ENCODE measurements at regions of chr1 and their contacts with region 1.

Region 1: GRCh38 chr1:1019122-1019999 is 559 bp upstream of the AGRN start:
- DNase-seq: peak; percentile 64 to 92 (median 78)
- ATAC-seq: peak; percentile 82
- H3K4me3 ChIP-seq: peak overlapping the region; percentile 40
- H3K4me3 Mint-ChIP-seq: peak overlapping the region; percentile 79
- H3K27ac ChIP-seq: no peak overlapping the region
- H3K27ac Mint-ChIP-seq: no peak overlapping the region
- H3K4me1 ChIP-seq: peaks cover 40% of the 10 kb centered on the region
- H3K4me1 Mint-ChIP-seq: peaks cover 22% of the 10 kb centered on the region
- H3K27me3 ChIP-seq: peaks cover 0 to 1% of the 10 kb centered on the region in 2 experiments
- H3K27me3 Mint-ChIP-seq: peaks cover 5% of the 10 kb centered on the region
- CTCF ChIP-seq: peak; percentile 43

Region 2: DNA sequence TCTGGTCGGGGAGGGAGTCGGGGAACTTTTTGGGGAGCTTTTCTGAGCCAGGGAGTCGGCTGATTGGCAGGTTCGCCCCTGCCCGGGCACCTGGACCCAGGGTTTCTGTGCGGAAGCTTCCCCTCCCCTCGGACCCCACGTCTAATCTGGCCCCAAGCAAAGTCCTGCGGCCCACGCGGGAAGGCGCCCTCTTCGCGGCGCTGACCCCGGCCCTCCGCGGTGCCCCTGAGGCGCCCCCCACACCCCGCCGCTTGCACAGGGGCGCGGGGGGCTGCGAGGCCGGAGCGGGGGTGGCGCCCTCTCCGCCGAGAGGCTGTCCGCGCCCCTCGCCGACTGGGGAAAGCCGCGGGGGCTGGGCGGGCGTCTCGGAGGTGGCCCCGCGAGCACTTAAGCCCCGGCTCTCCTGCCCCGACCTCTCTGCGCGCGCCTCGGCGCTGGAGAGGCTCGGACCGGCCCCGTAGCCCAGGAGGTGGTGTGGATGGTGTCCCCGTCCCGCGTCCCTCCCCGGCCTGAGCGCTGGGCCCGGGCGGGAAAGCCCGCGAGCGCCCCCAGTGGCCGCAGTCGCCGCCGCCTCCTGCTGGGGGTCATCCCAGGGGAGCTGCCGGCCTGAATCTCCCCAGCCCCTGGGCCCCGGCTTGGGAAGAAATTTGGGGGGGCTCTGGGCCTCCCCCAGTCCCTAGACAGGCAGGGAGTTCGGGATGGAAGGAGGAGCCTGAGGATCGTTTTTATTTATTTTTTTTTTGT is 17.7 kb before region 1 on chr1:
- CTCF ChIA-PET with region 1: interaction called, 6 read pairs
- POLR2A ChIA-PET with region 1: interaction called, 11 read pairs
- intact Hi-C with region 1: no loop called
- DNase-seq: peak in 13 of 14 experiments; percentile 44 to 80 (median 62)
- ATAC-seq: no peak
- H3K4me3 ChIP-seq: peak overlapping the region; percentile 37
- H3K4me3 Mint-ChIP-seq: peak overlapping the region; percentile 87
- H3K27ac ChIP-seq: no peak overlapping the region
- H3K27ac Mint-ChIP-seq: peak overlapping the region; percentile 94
- H3K4me1 ChIP-seq: peaks cover 49% of the 10 kb centered on the region
- H3K4me1 Mint-ChIP-seq: peaks cover 17% of the 10 kb centered on the region
- H3K27me3 ChIP-seq: peaks cover 65 to 78% of the 10 kb centered on the region in 2 experiments
- H3K27me3 Mint-ChIP-seq: peaks cover 57% of the 10 kb centered on the region
- CTCF ChIP-seq: peak; percentile 92

Region 3: DNA sequence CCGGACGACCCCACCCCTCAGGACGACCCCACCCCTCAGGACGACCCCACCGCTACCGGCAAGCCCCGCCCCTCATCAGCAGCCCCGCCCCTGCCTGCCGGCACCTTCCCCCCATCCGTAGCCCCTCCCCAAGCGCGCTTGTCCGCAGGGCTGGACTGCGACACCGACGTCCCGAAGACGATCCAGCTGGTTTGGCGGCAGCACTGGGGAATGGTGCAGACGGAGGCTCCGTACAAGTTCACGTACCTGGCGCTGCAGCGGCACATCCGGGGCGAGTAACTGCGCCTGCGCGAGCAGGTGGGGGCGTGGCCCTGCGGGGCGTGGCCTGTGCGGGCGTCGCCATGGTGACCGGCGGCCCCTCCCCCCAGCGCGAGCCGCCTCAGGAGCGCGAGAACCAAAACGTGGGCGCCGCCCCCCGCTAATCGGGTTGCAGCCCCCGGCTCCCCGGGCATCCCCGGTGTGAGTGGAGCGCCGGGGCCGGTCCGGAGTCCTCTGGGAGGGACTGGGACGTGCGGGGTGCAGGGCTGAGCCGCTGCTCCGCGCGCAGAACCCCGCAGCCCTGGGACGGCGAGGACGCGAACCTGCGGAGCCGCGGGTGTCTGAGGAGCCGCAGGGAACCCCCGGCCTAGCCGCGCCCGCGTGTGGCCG is 49.8 kb after region 1 on chr1:
- CTCF ChIA-PET with region 1: interaction called, 7 read pairs
- POLR2A ChIA-PET with region 1: no interaction called
- intact Hi-C with region 1: loop called in 1 of 2 experiments (anchors 2 kb)
- DNase-seq: peak; percentile 86 to 97 (median 92)
- ATAC-seq: peak; percentile 69
- H3K4me3 ChIP-seq: peak overlapping the region; percentile 61
- H3K4me3 Mint-ChIP-seq: peak overlapping the region; percentile 87
- H3K27ac ChIP-seq: peak overlapping the region in 1 of 2 donors; percentile 41
- H3K27ac Mint-ChIP-seq: peak overlapping the region; percentile 78
- H3K4me1 ChIP-seq: peaks cover 22% of the 10 kb centered on the region
- H3K4me1 Mint-ChIP-seq: no peaks in the 10 kb centered on the region
- H3K27me3 ChIP-seq: peaks cover 9 to 11% of the 10 kb centered on the region in 2 experiments
- H3K27me3 Mint-ChIP-seq: peaks cover under 1% of the 10 kb centered on the region
- CTCF ChIP-seq: no peak

Measured in CD4-positive, alpha-beta T cell (primary cell).